Activated T-helper 1 cell treated with anti-CD3 and anti-CD28 coated beads, Interleukin-12 subunit alpha, Interleukin-12 subunit beta, Interleukin-2, Interleukin-4 antibody, amounts not matched to agents 30 ng/mL and 10 ng/mL and 1 ng/mL, durations not matched to agents 14 hours and 24 hours and 36 hours (primary cell): ENCODE measurements at regions of chr22 and their contacts with region 1.

Region 1: DNA sequence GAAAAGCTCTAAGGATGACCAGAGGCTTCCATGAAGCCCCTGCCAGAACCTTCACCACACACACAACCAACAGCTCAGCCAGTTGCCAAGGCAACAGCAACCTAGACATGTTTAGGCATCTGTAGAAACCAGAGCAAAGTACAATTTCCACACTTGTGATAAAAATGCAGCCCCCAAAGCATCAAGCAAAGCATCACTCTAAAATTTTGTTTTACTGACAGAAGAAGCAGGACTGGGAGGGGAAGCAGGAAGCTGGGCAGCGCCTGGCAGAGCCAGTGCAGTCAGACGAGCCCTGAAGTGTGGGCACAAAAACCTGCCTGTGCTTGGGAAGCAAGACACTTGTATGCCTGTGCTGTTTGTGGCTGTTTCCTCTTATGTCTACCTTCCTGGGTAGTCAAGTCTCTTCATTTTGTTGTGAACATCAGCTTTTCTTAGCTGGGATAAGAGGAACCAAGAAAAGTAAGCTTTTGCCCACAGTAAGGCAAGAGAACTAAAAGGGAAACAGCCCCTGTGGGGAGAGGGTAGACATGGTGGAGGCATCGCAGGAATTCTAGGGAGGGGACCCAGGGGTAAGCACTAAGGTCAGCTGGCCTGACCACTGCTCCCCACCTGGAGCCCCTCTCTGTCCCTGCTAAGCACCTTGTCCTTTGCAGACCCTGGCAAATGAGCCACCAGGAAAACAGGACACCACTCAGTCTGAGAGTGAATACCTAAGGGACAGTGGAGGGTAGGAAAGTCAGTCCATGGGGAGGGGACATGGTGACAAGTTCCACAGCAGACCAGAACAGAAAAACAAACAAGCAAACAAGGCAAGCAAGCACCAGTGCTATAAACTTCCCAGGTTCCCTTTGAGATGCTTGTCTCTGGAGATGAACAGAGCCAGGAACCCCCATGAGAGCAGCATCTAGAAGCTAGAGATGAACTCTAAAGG is 13.4 kb downstream of the PACSIN2 start:
- DNase-seq: no peak
- H3K4me3 Mint-ChIP-seq: peak overlapping the region; percentile 53
- H3K27ac Mint-ChIP-seq: peak overlapping the region; percentile 26
- H3K4me1 Mint-ChIP-seq: peaks cover 69% of the 10 kb centered on the region
- H3K27me3 Mint-ChIP-seq: no peaks in the 10 kb centered on the region

Region 2: GRCh38 chr22:42933481-42934091 is 68.0 kb before region 1 on chr22:
- intact Hi-C with region 1: loop called (anchors 5 kb)
- DNase-seq: no peak
- H3K4me3 Mint-ChIP-seq: peak overlapping the region; percentile 61
- H3K27ac Mint-ChIP-seq: peak overlapping the region; percentile 91
- H3K4me1 Mint-ChIP-seq: peaks cover 71% of the 10 kb centered on the region
- H3K27me3 Mint-ChIP-seq: no peaks in the 10 kb centered on the region

Region 3: DNA sequence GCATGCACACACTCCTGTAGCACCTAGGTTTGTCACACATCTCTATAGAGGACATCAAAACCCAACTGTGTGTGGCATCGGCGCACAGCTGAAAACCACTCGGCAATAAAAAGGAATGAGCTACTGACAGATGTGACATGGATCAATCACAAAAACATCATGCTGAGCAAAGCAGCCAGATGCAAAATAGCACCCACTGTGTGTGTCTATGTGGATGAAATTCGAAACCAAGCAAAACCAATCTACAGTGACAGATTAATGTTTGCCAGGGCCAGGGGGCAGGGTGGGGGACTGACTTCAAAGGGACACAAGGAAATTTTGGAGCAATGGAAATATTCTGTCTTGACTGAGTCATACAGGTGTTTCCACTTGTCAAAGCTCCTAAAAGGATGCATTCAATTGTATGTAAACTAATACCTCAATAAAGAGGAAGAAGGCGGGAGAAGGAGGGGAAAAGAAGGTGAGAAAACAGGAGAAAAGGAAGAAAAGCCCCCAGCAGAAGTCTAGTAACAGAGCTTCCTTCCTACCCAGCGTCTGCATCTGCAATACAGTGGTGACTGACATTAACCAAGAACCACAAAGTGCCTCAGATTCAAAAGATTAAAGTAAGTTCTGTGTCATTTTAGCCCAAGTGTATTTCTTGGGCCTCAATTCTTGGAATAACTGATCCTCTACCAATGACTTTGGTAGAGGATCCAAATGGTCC is 36.4 kb before region 1 on chr22:
- intact Hi-C with region 1: loop called (anchors 1 kb)
- DNase-seq: no peak
- H3K4me3 Mint-ChIP-seq: no peak overlapping the region
- H3K27ac Mint-ChIP-seq: peak overlapping the region; percentile 78
- H3K4me1 Mint-ChIP-seq: peaks cover 44% of the 10 kb centered on the region
- H3K27me3 Mint-ChIP-seq: no peaks in the 10 kb centered on the region

Region 4: GRCh38 chr22:42990139-42990767 is 11.3 kb before region 1 on chr22:
- intact Hi-C with region 1: no loop called
- DNase-seq: no peak
- H3K4me3 Mint-ChIP-seq: no peak overlapping the region
- H3K27ac Mint-ChIP-seq: no peak overlapping the region
- H3K4me1 Mint-ChIP-seq: no peaks in the 10 kb centered on the region
- H3K27me3 Mint-ChIP-seq: no peaks in the 10 kb centered on the region

Region 5: GRCh38 chr22:43014869-43015676 is 13.5 kb after region 1 on chr22 and contains the start of gene PACSIN2:
- intact Hi-C with region 1: loop called (anchors 1 kb)
- DNase-seq: peak; percentile 99
- H3K4me3 Mint-ChIP-seq: peak within 1 kb of the TSS; percentile 92
- H3K27ac Mint-ChIP-seq: peak within 1 kb of the TSS; percentile 79
- H3K4me1 Mint-ChIP-seq: peaks cover 22% of the 10 kb centered on the region
- H3K27me3 Mint-ChIP-seq: peaks cover 9% of the 10 kb centered on the region
- total RNA-seq, gene PACSIN2: 30.5 and 31.7 TPM in 2 replicates